SK-N-SH (cell line): ENCODE measurements at regions of chr12 and their contacts with region 1.

Region 1: DNA sequence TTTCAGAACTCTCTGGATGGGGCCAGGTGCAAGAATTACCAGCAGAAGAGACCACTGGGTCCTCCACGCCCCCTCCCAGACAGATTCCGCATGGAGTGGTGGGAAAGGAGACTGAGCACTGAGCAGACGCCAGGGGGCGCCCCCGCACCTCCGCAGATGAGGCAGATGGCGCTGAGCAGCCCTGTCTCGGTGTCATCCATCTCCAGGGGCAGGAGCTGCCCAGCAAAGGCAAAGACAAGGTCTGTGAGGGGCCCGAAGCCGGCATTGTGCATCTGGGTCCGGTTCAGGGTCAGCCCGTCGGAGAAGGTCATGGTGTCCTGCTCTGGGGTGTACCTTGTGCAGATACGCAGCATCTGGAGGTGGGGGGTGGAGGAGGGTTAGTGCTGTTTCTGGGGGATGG is 6.3 kb upstream of the ITGB7 start:
- DNase-seq: peak; percentile 93
- H3K4me3 ChIP-seq: no peak overlapping the region
- H3K27ac ChIP-seq: no peak overlapping the region; a peak in 1 of 4 replicates
- H3K4me1 ChIP-seq: peaks cover 6 to 19% of the 10 kb centered on the region in 2 experiments; a peak in 3 of 4 replicates
- H3K27me3 ChIP-seq: no peaks in the 10 kb centered on the region
- CTCF ChIP-seq: peak; percentile 93
- EP300 ChIP-seq: no peak
- RAD21 ChIP-seq: peak; percentile 96

Region 2: GRCh38 chr12:53190108-53190729 is 23.1 kb before region 1 on chr12:
- CTCF ChIA-PET with region 1: interaction called, 143 read pairs
- POLR2A ChIA-PET with region 1: no interaction called
- DNase-seq: peak; percentile 79
- H3K4me3 ChIP-seq: no peak overlapping the region
- H3K27ac ChIP-seq: no peak overlapping the region
- H3K4me1 ChIP-seq: peaks cover 0 to 12% of the 10 kb centered on the region in 2 experiments; a peak in 1 of 4 replicates
- H3K27me3 ChIP-seq: no peaks in the 10 kb centered on the region
- CTCF ChIP-seq: peak; percentile 73
- EP300 ChIP-seq: no peak
- RAD21 ChIP-seq: peak; percentile 51

Region 3: DNA sequence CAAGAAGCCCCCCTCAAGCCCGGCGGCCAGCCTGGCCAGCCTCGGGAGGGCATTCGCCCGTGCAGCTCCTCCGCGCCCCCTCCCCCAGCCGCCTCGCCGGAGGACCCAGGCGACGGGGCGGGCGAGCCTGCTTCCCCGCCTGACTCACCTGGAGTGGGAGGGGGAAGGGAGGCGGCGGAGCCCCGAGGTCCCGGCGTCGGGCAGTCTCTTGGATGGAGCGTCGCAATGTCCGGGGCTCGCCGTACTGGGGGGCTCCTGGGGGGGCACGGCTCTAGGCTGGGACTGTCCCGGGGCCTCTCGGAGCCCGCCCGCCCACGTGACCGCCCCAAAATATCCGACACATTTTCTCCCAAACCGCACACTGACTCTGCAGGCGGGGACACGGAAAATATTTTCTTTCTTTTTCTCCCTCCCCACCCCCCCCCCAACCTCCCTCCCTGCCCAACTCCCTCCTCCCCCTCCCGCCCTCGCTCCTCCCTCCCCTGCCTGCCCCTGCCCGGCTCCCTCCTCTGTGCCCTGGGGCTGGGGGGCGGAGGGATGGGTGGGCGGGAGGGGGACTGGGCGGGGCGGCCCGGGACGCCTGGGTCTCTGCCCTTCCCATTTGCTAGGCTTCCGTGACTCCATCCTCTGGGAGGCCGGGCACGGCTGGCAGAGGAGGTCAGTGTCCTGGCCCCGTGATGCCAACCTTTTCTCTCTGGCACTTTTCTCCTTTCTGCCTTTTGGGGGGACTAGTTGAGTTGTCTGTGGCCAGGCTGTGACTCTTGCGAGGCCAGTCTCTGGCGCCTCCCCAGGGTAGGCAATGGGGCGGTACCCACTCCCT is 18.7 kb after region 1 on chr12 and contains the start of gene RARG:
- CTCF ChIA-PET with region 1: interaction called, 19 read pairs
- POLR2A ChIA-PET with region 1: no interaction called
- DNase-seq: peak; percentile 93
- H3K4me3 ChIP-seq: peak within 1 kb of the TSS; percentile 75 to 81
- H3K27ac ChIP-seq: peak within 1 kb of the TSS; percentile 50 to 85
- H3K4me1 ChIP-seq: peaks cover 33 to 52% of the 10 kb centered on the region in 2 experiments; a peak in 3 of 4 replicates
- H3K27me3 ChIP-seq: no peaks in the 10 kb centered on the region
- CTCF ChIP-seq: 0 out of 2 replicates have a peak, but pooled peaks have one; percentile 9
- EP300 ChIP-seq: no peak
- RAD21 ChIP-seq: 0 out of 2 replicates have a peak, but pooled peaks have one; percentile 7
- polyA plus RNA-seq, gene RARG: 35.0 and 36.6 TPM in 2 replicates

Region 4: DNA sequence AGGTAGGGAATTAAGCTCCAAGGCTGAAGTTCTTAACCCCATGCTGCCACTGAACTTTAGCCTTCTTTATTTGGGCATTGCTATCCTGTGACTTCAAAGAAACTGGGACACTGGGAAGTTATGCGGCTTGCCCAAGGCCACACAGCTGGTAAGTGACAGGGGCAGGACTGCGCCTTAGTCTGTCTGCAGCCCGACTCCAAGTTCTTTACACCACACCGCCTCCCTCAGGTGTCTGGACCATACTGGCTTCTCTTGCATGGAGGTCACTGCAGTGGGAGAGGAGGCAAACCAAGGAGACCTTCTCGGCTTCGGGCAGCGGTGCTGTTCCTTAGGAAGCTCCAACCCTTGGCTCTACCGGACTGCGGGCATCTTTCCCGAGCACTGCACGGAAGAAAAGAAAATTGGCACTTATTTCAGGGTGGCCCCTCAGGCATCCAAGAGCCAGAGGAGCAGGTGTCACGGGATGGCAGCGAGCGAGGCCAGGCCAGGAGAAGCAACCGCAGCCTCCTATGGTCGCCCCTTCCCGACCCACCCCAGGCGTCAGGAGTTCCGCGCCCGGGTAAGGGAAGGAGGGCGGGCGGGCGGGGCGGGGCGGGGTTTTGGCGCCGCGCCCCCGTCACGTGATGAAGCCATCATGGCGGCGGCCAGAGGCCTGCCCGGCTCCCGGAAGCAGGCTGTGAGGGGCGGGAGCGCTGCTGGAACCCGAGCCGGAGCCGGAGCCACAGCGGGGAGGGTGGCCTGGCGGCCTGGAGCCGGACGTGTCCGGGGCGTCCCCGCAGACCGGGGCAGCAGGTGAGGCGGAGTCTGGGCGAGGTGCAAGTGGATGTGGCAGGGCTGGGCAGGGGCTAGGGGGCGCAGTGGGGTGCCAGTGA is 38.4 kb after region 1 on chr12:
- CTCF ChIA-PET with region 1: interaction called, 141 read pairs
- POLR2A ChIA-PET with region 1: interaction called, 4 read pairs
- DNase-seq: peak; percentile 97
- H3K4me3 ChIP-seq: peak overlapping the region; percentile 66 to 91
- H3K27ac ChIP-seq: peak overlapping the region; percentile 57 to 84; a peak in 3 of 4 replicates
- H3K4me1 ChIP-seq: peaks cover 0 to 16% of the 10 kb centered on the region in 2 experiments; a peak in 1 of 4 replicates
- H3K27me3 ChIP-seq: no peaks in the 10 kb centered on the region
- CTCF ChIP-seq: peak; percentile 59
- EP300 ChIP-seq: no peak
- RAD21 ChIP-seq: peak; percentile 81

Region 5: DNA sequence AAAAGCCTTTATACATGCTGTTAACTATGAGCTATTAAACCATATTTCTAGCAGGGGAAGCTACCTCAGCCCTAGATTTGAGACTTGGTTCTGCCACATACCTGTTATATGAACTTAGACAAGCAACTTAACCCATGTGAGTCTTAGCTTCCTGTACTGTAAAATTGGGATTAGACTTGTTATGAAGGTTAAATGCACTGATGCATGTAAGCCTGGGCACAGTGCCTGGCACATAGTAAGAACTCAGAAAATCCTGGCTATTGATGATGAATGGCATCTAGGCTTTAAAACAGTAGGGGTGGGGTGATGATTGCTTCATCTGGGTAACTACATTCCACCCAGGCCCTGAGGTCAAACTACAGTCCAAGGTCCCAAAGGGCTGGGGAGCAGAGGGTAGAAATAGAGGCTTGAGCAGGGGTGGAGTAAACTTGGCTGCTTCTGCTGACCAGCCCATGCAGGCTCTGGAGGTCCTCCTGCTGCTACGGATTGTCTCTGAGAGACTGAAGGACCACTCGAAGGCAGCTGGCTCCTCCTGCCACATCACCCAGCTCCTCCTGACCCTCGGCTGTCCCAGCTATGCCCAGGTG is 66.0 kb after region 1 on chr12:
- CTCF ChIA-PET with region 1: interaction called, 363 read pairs
- POLR2A ChIA-PET with region 1: no interaction called
- DNase-seq: no peak
- H3K4me3 ChIP-seq: no peak overlapping the region
- H3K27ac ChIP-seq: no peak overlapping the region
- H3K4me1 ChIP-seq: no peaks in the 10 kb centered on the region
- H3K27me3 ChIP-seq: no peaks in the 10 kb centered on the region
- CTCF ChIP-seq: no peak
- EP300 ChIP-seq: no peak
- RAD21 ChIP-seq: no peak